Activated CD4-positive, alpha-beta T cell treated with anti-CD3 and anti-CD28 coated beads for 36 hours (primary cell): ENCODE measurements at regions of chr16 and their contacts with region 1.

Region 1: GRCh38 chr16:25838724-25839186 is 147.0 kb downstream of the HS3ST4 start:
- DNase-seq: peak; percentile 34
- ATAC-seq: peak; percentile 39
- H3K4me3 Mint-ChIP-seq: no peak overlapping the region
- H3K27ac Mint-ChIP-seq: no peak overlapping the region
- H3K4me1 Mint-ChIP-seq: peaks cover 3% of the 10 kb centered on the region
- H3K27me3 Mint-ChIP-seq: peaks cover 13% of the 10 kb centered on the region

Region 2: DNA sequence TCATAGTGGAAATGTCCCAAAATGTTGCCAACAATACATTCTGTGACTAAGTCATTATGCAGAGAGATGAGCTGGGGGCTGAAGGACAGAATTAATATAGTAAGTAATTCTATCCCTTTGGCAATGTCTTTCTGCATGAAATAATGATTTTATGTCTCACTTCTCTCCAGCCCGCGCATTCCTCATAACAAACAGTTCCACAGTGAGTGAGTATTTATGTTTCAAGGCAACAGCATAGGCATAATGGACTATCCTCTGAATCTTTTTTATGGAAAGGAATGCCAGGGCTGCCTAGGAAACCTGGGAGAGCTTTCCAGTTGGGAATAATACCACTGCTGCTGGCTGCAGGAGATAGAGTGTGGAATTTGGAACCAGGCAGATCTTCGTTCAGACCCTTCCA is 330.7 kb after region 1 on chr16:
- CTCF ChIA-PET with region 1: no interaction called
- POLR2A ChIA-PET with region 1: no interaction called
- intact Hi-C with region 1: no loop called
- DNase-seq: no peak
- ATAC-seq: no peak
- H3K4me3 Mint-ChIP-seq: no peak overlapping the region
- H3K27ac Mint-ChIP-seq: no peak overlapping the region
- H3K4me1 Mint-ChIP-seq: no peaks in the 10 kb centered on the region
- H3K27me3 Mint-ChIP-seq: peaks cover 21% of the 10 kb centered on the region

Region 3: DNA sequence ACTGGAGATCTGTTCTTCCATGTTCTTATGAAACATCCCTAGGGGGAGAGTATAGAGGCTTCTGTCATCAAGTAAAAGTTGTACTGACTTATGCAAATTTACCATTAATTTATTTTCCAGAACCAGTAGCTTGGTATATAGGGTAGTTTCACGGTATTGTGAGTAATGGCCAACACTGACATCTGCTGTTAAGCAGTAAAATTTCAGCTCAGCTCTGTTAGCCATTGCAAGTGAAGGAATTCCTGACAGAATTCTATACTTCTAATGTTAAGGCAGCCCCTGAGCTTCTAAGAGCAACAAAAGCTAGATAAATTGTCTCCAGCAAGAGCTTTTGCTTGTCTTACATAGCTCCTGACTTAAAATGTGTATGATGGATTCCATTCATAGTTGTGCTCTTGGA is 614.5 kb after region 1 on chr16:
- CTCF ChIA-PET with region 1: no interaction called
- POLR2A ChIA-PET with region 1: no interaction called
- intact Hi-C with region 1: loop called in 1 of 2 experiments (anchors 2 kb)
- DNase-seq: no peak
- ATAC-seq: no peak
- H3K4me3 Mint-ChIP-seq: no peak overlapping the region
- H3K27ac Mint-ChIP-seq: no peak overlapping the region
- H3K4me1 Mint-ChIP-seq: no peaks in the 10 kb centered on the region
- H3K27me3 Mint-ChIP-seq: peaks cover 11% of the 10 kb centered on the region

Region 4: GRCh38 chr16:26569793-26570192 is 731.0 kb after region 1 on chr16:
- CTCF ChIA-PET with region 1: no interaction called
- POLR2A ChIA-PET with region 1: no interaction called
- intact Hi-C with region 1: loop called in 1 of 2 experiments (anchors 2 kb)
- DNase-seq: peak; percentile 25
- ATAC-seq: peak; percentile 64
- H3K4me3 Mint-ChIP-seq: no peak overlapping the region
- H3K27ac Mint-ChIP-seq: no peak overlapping the region
- H3K4me1 Mint-ChIP-seq: no peaks in the 10 kb centered on the region
- H3K27me3 Mint-ChIP-seq: peaks cover 4% of the 10 kb centered on the region

Region 5: DNA sequence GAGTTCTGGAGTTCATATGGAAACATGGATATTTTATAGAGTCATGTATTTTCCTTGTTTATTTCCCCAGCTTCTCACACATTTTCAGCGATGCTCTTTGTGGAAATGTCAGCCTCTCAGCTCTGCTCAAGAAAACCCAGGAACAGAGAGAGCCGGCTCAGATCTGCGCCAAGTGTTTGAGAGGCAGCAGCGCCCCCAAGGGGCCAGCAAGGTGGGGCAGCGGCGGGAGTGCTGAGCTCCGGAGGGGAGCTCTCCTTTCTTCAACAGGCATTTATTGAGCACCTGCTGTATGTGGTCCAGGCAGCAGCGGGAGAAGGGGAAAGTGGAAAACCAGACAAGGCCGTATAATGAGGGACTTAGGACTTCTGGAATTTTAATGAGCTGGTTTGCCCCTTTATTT is 806.9 kb after region 1 on chr16:
- CTCF ChIA-PET with region 1: interaction called, 6 read pairs
- POLR2A ChIA-PET with region 1: no interaction called
- intact Hi-C with region 1: loop called (anchors 1 kb)
- DNase-seq: peak; percentile 82
- ATAC-seq: peak; percentile 87
- H3K4me3 Mint-ChIP-seq: no peak overlapping the region
- H3K27ac Mint-ChIP-seq: no peak overlapping the region
- H3K4me1 Mint-ChIP-seq: peaks cover 8% of the 10 kb centered on the region
- H3K27me3 Mint-ChIP-seq: peaks cover 5% of the 10 kb centered on the region

Region 6: DNA sequence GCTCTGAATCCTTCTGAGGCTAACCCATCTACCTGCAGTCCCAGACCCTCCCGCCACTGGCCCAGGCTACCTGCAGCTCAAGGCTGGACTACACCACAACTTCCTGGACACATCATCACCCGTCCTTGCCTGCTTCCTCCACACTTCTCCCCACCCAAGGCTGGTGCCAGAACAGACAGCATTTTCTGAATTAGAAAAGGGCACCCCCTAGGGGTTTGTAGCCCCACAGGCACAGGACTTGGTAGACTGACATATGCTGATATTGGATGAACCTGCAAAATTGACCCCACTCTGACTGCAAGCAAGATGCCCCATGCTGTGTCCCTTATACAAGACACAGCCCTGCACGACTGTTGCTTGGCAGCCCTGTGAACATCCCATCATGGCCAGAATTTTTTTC is 956.4 kb after region 1 on chr16:
- CTCF ChIA-PET with region 1: no interaction called
- POLR2A ChIA-PET with region 1: no interaction called
- intact Hi-C with region 1: loop called in 1 of 2 experiments (anchors 2 kb)
- DNase-seq: peak; percentile 45
- ATAC-seq: peak; percentile 61
- H3K4me3 Mint-ChIP-seq: no peak overlapping the region
- H3K27ac Mint-ChIP-seq: no peak overlapping the region
- H3K4me1 Mint-ChIP-seq: peaks cover 4% of the 10 kb centered on the region
- H3K27me3 Mint-ChIP-seq: peaks cover 30% of the 10 kb centered on the region

Region 7: DNA sequence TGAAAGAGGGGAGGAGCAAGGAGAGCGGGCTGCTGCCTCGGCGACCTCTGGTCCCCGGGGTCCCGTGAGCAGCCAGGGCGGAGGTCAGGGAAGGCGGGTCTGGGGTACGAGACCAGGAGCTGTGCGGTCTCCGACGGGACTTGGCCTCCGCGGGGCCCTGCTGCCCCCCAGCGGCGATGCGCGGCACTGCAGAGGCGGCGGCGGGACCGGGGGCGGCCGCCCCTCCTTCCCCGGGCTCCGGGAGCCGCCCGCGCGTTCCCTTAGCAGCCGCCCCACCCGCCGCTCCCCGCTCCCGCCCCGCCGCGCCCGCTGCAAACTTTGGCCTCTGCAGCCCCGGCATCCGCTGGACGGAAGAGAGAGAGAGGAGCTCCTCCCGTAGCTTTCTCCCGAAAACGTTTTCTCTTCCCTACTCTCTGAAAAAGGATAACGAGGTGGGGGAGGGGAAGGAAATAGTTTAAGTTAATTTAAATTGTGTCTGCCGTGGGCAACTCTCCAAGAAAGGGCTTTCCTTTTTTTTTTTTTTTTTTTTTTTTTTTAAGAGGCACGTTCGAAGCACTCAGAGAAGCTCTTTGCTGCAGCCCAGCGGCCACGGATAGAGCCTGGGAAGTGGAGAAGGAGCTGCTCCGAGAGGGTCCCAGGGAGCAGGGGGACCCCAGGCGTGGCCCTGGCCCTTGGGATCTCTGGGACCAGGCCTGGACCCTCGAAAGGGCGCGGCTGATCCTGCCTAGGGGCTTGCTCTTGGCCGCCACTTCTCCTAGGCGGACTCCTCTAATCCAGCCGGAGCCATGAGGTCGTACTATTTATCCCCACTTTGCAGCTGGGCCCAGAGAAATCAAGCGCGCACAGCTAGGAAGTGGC is 1271.1 kb after region 1 on chr16:
- CTCF ChIA-PET with region 1: no interaction called
- POLR2A ChIA-PET with region 1: no interaction called
- intact Hi-C with region 1: loop called in 1 of 2 experiments (anchors 1 kb)
- DNase-seq: peak; percentile 89
- ATAC-seq: peak; percentile 92
- H3K4me3 Mint-ChIP-seq: peak overlapping the region; percentile 39
- H3K27ac Mint-ChIP-seq: no peak overlapping the region
- H3K4me1 Mint-ChIP-seq: peaks cover 3% of the 10 kb centered on the region
- H3K27me3 Mint-ChIP-seq: no peaks in the 10 kb centered on the region

Region 8: DNA sequence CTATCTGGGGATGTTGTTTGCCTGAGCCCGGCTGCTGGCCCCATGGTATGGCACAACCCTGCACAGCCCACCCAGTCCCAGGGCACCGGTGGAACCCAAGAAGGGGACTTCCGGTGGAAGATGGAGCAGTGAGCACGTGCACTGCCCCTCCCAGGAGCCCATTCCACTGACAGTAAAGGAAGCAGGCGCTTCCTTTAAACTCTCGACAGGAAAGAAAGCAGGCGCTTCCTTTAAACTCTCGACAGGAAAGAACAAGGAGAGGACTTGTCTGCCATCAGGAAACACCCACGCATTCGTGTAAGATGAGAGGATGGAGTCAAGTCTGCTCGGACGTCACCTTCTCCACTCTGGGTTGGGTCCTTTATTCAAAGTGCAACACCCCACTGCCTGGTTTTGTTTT is 1616.9 kb after region 1 on chr16:
- CTCF ChIA-PET with region 1: no interaction called
- POLR2A ChIA-PET with region 1: no interaction called
- intact Hi-C with region 1: loop called in 1 of 2 experiments (anchors 2 kb)
- DNase-seq: peak; percentile 58
- ATAC-seq: no peak
- H3K4me3 Mint-ChIP-seq: no peak overlapping the region
- H3K27ac Mint-ChIP-seq: peak overlapping the region; percentile 86
- H3K4me1 Mint-ChIP-seq: peaks cover 58% of the 10 kb centered on the region
- H3K27me3 Mint-ChIP-seq: no peaks in the 10 kb centered on the region